MCF 10A (cell line): ENCODE measurements at regions of chr6 and their contacts with region 1.

Region 1: DNA sequence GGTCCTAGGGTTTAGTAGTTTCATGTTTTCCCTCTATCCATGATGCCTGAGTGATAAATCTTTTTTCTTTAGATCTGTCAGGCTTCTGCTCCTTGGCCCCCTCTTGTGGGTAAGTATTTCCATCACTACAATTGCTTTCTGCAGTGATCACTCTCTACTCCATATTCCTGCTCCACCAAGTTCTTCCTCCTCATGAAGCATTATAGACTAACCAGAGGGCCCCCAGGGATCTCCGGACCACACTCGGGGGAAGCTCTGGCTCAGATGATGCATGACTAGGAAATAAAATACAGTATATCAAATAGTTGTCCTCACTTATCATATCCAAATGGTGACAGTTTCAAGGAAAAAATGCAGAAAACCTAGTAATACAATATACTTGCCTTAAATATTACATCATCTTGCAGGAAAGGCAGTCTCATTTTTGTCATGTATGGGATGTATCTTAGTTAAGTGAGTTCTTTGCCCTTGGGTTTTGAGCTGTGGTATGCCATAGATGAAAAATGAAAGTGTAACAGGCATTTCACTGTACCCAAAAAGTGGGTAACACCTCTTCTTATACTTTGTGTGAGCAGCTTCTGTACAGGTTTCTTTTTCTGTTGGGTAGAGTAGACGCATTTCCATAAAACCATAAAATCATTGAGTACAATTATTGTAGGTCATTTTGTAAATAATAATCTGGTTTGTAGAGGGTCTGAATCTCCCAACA is 200.9 kb upstream of the EYA4 start:
- DNase-seq: peak; percentile 27
- H3K4me3 Mint-ChIP-seq: no peak overlapping the region
- H3K27ac Mint-ChIP-seq: no peak overlapping the region
- H3K4me1 Mint-ChIP-seq: no peaks in the 10 kb centered on the region
- H3K27me3 Mint-ChIP-seq: peaks cover 60% of the 10 kb centered on the region
- CTCF ChIP-seq: peak; percentile 58

Region 2: DNA sequence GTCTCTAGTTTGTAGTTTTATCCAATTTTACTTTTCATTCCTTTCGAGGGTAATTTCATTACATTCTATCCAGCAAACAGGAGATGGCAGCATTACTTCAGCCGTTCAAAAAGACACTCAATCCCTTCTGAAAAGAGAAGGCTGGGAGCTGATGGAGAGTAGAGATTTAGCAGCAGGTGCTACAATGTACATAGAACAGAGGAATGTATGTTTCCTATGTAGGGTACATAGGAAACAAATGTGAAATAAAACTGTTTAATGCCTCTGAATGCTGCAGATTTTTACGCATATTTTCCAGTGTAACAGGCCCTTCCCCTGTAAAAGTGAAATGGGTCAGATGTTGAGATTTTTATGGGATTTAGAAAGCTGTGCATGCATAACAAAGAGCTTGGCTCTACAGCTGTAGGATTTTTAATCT is 209.9 kb before region 1 on chr6:
- CTCF ChIA-PET with region 1: interaction called, 10 read pairs
- POLR2A ChIA-PET with region 1: no interaction called
- intact Hi-C with region 1: loop called (anchors 1 kb)
- DNase-seq: peak; percentile 45
- H3K4me3 Mint-ChIP-seq: no peak overlapping the region
- H3K27ac Mint-ChIP-seq: no peak overlapping the region
- H3K4me1 Mint-ChIP-seq: no peaks in the 10 kb centered on the region
- H3K27me3 Mint-ChIP-seq: peaks cover 19% of the 10 kb centered on the region
- CTCF ChIP-seq: peak; percentile 41

Region 3: GRCh38 chr6:132937466-132937906 is 102.8 kb before region 1 on chr6:
- CTCF ChIA-PET with region 1: no interaction called
- POLR2A ChIA-PET with region 1: no interaction called
- intact Hi-C with region 1: loop called (anchors 1 kb)
- DNase-seq: peak; percentile 64
- H3K4me3 Mint-ChIP-seq: no peak overlapping the region
- H3K27ac Mint-ChIP-seq: no peak overlapping the region
- H3K4me1 Mint-ChIP-seq: peaks cover 4% of the 10 kb centered on the region
- H3K27me3 Mint-ChIP-seq: peaks cover 29% of the 10 kb centered on the region
- CTCF ChIP-seq: peak; percentile 44